GM12878 (cell line): ENCODE measurements at regions of chr6 and their contacts with region 1.

Region 1: GRCh38 chr6:37691904-37692806 is 5.5 kb downstream of the MDGA1 start:
- DNase-seq: no peak
- ATAC-seq: peak; percentile 87
- H3K4me3 ChIP-seq: no peak overlapping the region
- H3K27ac ChIP-seq: no peak overlapping the region
- H3K4me1 ChIP-seq: peaks cover 11% of the 10 kb centered on the region
- H3K27me3 ChIP-seq: peaks cover 17 to 18% of the 10 kb centered on the region in 2 experiments
- CTCF ChIP-seq: peak; percentile 97 to 99 (median 98)
- EP300 ChIP-seq: no peak
- POLR2A ChIP-seq: no peak
- RAD21 ChIP-seq: peak; percentile 95

Region 2: GRCh38 chr6:37324131-37325033 is 367.8 kb before region 1 on chr6:
- CTCF ChIA-PET with region 1: interaction called, 26 read pairs
- POLR2A ChIA-PET with region 1: no interaction called
- RAD21 ChIA-PET with region 1: interaction called, 9 read pairs
- SMC1A ChIA-PET with region 1: interaction called, 5 read pairs
- in situ Hi-C with region 1: loop called (anchors 5 kb)
- intact Hi-C with region 1: loop called (anchors 2 kb)
- DNase-seq: no peak
- ATAC-seq: no peak
- H3K4me3 ChIP-seq: no peak overlapping the region
- H3K27ac ChIP-seq: no peak overlapping the region
- H3K4me1 ChIP-seq: no peaks in the 10 kb centered on the region
- H3K27me3 ChIP-seq: no peaks in the 10 kb centered on the region
- CTCF ChIP-seq: no peak
- EP300 ChIP-seq: no peak
- POLR2A ChIP-seq: no peak
- RAD21 ChIP-seq: no peak

Region 3: GRCh38 chr6:37483917-37484785 is 208.0 kb before region 1 on chr6:
- CTCF ChIA-PET with region 1: interaction called, 6 read pairs
- POLR2A ChIA-PET with region 1: no interaction called
- RAD21 ChIA-PET with region 1: interaction called, 3 read pairs
- SMC1A ChIA-PET with region 1: interaction called, 3 read pairs
- in situ Hi-C with region 1: loop called (anchors 5 kb)
- intact Hi-C with region 1: loop called (anchors 1 kb)
- DNase-seq: no peak
- ATAC-seq: peak; percentile 93
- H3K4me3 ChIP-seq: no peak overlapping the region
- H3K27ac ChIP-seq: no peak overlapping the region
- H3K4me1 ChIP-seq: peaks cover 7% of the 10 kb centered on the region; the same call in 1 of the 2 replicates
- H3K27me3 ChIP-seq: no peaks in the 10 kb centered on the region
- CTCF ChIP-seq: peak; percentile 85 to 97 (median 96); a peak in 5 of 6 replicates
- EP300 ChIP-seq: no peak
- POLR2A ChIP-seq: no peak; the same call in 1 of the 2 replicates
- RAD21 ChIP-seq: peak; percentile 97

Region 4: GRCh38 chr6:37531026-37531425 is 161.1 kb before region 1 on chr6:
- CTCF ChIA-PET with region 1: interaction called, 99 read pairs
- POLR2A ChIA-PET with region 1: no interaction called
- RAD21 ChIA-PET with region 1: interaction called, 58 read pairs
- SMC1A ChIA-PET with region 1: interaction called, 46 read pairs
- in situ Hi-C with region 1: loop called (anchors 5 kb)
- intact Hi-C with region 1: loop called (anchors 5 kb)
- DNase-seq: no peak
- ATAC-seq: no peak
- H3K4me3 ChIP-seq: no peak overlapping the region
- H3K27ac ChIP-seq: no peak overlapping the region
- H3K4me1 ChIP-seq: no peaks in the 10 kb centered on the region
- H3K27me3 ChIP-seq: no peaks in the 10 kb centered on the region
- CTCF ChIP-seq: no peak
- EP300 ChIP-seq: no peak
- POLR2A ChIP-seq: no peak
- RAD21 ChIP-seq: no peak

Region 5: DNA sequence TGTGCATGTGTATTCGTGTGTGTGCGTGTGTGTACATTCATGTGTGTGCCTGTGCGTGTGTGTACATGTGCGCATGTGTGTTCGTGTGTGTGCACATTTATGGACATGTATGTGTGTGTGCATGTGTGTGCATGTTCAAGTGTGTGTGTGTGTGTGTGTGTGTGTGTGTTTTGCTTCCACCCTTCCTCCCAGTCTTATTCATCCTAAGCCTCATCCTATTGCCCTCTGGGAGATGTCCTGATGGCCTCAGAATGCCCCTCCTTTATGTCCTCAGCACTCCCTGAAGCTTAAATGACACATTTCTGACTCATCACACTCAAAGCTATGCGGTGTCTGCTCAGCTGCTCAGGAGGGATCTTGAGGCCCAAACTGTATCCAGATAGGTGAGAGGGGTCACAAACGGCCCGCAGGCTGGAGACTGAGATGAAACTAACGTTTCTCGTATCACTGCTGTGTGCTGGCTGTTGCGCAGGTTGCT is 115.8 kb before region 1 on chr6:
- CTCF ChIA-PET with region 1: interaction called, 38 read pairs
- POLR2A ChIA-PET with region 1: no interaction called
- RAD21 ChIA-PET with region 1: interaction called, 4 read pairs
- SMC1A ChIA-PET with region 1: interaction called, 7 read pairs
- in situ Hi-C with region 1: no loop called
- intact Hi-C with region 1: loop called (anchors 5 kb)
- DNase-seq: no peak
- ATAC-seq: no peak
- H3K4me3 ChIP-seq: no peak overlapping the region
- H3K27ac ChIP-seq: no peak overlapping the region
- H3K4me1 ChIP-seq: no peaks in the 10 kb centered on the region
- H3K27me3 ChIP-seq: no peaks in the 10 kb centered on the region
- CTCF ChIP-seq: no peak
- EP300 ChIP-seq: no peak
- POLR2A ChIP-seq: no peak
- RAD21 ChIP-seq: no peak

Region 6: DNA sequence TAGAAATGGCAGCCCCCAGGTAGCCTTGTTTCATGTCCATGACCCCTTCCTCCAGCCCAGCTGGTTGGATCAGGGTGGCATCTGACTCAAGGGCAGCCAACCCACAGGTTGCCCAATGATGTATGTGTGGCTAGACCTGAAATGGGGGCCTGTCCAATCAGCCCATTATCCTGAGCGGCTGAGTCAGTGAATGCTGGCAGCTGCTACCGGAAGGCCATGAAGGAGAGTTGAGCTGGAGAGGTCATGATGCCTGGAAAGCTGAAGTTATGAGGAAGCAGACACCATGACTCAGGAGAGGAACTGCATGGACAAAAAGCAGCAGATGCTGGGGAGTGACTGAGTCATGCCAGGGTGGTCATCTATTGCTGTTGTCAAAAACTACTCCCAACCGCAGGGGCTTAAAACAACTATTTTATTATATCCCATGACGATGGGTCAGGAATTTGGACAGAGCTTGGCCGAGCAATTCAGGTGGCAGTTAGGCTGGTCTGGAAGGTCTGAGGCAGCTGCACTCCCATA is 61.8 kb before region 1 on chr6:
- CTCF ChIA-PET with region 1: interaction called, 12 read pairs
- POLR2A ChIA-PET with region 1: no interaction called
- RAD21 ChIA-PET with region 1: interaction called, 5 read pairs
- SMC1A ChIA-PET with region 1: interaction called, 7 read pairs
- in situ Hi-C with region 1: no loop called
- intact Hi-C with region 1: no loop called
- DNase-seq: no peak
- ATAC-seq: no peak
- H3K4me3 ChIP-seq: no peak overlapping the region
- H3K27ac ChIP-seq: no peak overlapping the region
- H3K4me1 ChIP-seq: no peaks in the 10 kb centered on the region
- H3K27me3 ChIP-seq: peaks cover 0 to 1% of the 10 kb centered on the region in 2 experiments; a peak in 2 of 4 replicates
- CTCF ChIP-seq: no peak
- EP300 ChIP-seq: no peak
- POLR2A ChIP-seq: no peak
- RAD21 ChIP-seq: no peak

Region 7: GRCh38 chr6:38671885-38672467 is 979.8 kb after region 1 on chr6:
- CTCF ChIA-PET with region 1: no interaction called
- POLR2A ChIA-PET with region 1: no interaction called
- RAD21 ChIA-PET with region 1: no interaction called
- SMC1A ChIA-PET with region 1: no interaction called
- in situ Hi-C with region 1: no loop called
- intact Hi-C with region 1: loop called (anchors 10 kb)
- DNase-seq: peak; percentile 55
- ATAC-seq: peak; percentile 91
- H3K4me3 ChIP-seq: no peak overlapping the region
- H3K27ac ChIP-seq: no peak overlapping the region
- H3K4me1 ChIP-seq: peaks cover 18% of the 10 kb centered on the region
- H3K27me3 ChIP-seq: no peaks in the 10 kb centered on the region
- CTCF ChIP-seq: peak; percentile 70 to 84 (median 81)
- EP300 ChIP-seq: no peak
- POLR2A ChIP-seq: no peak
- RAD21 ChIP-seq: peak; percentile 86